H1 (cell line): ENCODE measurements at regions of chr2 and their contacts with region 1.

Region 1: DNA sequence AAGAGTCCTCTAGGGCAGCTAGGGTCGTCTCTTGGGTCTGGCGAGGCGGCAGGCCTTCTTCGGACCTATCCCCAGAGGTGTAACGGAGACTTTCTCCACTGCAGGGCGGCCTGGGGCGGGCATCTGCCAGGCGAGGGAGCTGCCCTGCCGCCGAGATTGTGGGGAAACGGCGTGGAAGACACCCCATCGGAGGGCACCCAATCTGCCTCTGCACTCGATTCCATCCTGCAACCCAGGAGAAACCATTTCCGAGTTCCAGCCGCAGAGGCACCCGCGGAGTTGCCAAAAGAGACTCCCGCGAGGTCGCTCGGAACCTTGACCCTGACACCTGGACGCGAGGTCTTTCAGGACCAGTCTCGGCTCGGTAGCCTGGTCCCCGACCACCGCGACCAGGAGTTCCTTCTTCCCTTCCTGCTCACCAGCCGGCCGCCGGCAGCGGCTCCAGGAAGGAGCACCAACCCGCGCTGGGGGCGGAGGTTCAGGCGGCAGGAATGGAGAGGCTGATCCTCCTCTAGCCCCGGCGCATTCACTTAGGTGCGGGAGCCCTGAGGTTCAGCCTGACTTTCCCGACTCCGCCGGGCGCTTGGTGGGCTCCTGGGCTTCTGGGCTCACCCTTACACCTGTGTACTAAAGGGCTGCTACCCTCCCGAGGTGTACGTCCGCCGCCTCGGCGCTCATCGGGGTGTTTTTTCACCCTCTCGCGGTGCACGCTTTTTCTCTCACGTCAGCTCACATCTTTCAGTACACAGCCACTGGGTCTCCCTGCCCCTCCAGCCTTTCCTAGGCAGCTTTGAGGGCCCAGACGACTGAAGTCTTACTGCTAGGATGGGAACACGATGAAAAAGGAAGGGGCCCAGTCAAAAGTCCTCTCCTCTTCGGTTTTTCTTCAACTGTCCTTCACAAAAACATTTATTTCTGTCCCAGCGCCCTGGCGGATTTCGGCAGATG is 8.1 kb downstream of the SIX2 start:
- DNase-seq: peak in 1 of 2 experiments; percentile 83
- H3K4me3 ChIP-seq: peak overlapping the region; percentile 18 to 57 (median 44); a peak in 7 of 8 replicates
- H3K27ac ChIP-seq: no peak overlapping the region
- H3K4me1 ChIP-seq: peaks cover 0 to 21% (median 18%) of the 10 kb centered on the region in 4 experiments; a peak in 5 of 7 replicates
- H3K27me3 ChIP-seq: peaks cover 72 to 89% (median 85%) of the 10 kb centered on the region in 4 experiments
- CTCF ChIP-seq: no peak
- EP300 ChIP-seq: no peak
- POLR2A ChIP-seq: no peak
- RAD21 ChIP-seq: no peak

Region 2: DNA sequence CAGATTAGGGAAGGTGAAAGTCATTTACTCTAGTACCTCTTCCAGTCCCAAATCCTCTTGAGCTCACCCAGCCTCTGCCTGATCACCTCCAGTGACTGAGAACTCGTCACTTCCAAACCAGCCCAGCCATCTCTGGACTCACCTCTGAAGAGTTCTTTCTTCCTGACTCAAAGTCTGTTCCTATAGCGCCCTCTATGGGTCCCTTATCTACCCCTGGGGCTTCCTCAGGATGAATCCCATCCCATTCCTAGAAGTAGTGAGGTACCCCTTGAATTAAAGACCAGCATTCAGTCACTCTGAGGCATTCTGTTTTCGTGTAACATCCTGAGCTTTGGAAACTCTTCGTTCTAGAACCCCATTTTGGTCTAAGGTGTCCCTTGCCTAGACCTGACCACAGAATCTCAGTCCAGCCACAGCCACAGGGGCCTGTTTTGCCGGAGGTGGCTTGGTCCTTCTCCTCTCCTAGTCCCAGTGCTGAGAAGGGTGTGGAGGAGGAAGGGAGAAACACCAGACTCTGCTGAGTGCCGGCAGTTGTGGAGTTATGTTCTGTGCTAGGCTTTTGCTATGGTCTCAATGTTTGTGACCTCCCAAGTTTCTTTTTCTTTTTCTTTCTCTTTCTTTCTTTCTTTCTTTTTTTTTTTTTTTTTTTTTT is 27.0 kb before region 1 on chr2:
- CTCF ChIA-PET with region 1: interaction called, 46 read pairs
- POLR2A ChIA-PET with region 1: interaction called, 4 read pairs
- DNase-seq: peak in 1 of 2 experiments; percentile 74
- H3K4me3 ChIP-seq: no peak overlapping the region
- H3K27ac ChIP-seq: no peak overlapping the region
- H3K4me1 ChIP-seq: peaks cover 2 to 19% (median 10%) of the 10 kb centered on the region in 4 experiments; a peak in 6 of 7 replicates
- H3K27me3 ChIP-seq: no peaks in the 10 kb centered on the region; a peak in 1 of 7 replicates
- CTCF ChIP-seq: peak in 2 of 3 experiments; percentile 81 to 84; a peak in 3 of 4 replicates
- EP300 ChIP-seq: no peak
- POLR2A ChIP-seq: no peak
- RAD21 ChIP-seq: peak; percentile 85 to 92

Region 3: DNA sequence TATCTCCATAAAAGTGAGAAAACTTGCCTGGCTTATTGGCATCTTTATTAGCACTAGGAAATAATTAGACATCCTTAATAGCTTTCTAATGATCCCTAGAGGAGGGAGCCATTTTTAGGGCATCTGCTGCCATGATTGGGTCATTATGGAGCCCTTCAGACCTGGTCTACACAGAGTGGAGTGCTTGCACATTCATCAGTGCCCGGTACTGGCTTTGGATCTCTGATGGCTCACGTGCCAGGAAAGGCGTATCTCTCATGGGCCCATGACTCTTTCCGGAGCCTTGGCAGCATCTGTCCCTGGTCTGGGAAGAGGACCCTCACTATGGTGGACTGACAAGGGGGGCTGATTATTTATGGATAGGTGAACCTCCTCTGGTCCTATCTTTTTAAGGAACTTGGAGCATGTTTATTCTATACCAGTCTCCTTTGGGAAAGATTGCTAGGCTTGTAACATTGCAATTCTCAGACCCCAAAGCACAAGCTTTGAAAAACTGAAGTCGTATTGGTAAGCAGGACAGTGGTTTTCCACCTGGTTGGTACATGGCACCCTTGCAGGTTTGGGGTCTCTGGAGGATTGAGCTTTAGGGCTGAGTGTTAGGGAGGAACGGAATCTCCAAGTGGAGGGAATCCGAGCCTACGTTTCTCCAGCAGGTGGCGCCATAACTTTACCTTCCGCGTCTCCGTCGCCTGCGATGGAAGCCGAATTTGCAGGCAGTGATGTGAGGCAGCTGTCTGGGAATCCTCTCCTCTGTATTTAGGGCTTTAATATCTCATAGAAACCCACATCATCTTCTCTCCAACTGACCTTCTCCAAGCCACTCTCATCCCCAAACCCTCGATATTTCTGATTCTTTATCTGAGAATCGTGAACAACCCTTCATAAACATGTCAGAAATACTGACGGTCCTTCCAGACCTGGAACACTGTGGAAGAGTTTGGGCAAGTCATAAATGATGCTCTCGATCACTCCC is 19.8 kb before region 1 on chr2:
- CTCF ChIA-PET with region 1: interaction called, 105 read pairs
- POLR2A ChIA-PET with region 1: interaction called, 3 read pairs
- DNase-seq: peak in 1 of 2 experiments; percentile 93
- H3K4me3 ChIP-seq: no peak overlapping the region
- H3K27ac ChIP-seq: no peak overlapping the region
- H3K4me1 ChIP-seq: peaks cover 0 to 4% (median 0%) of the 10 kb centered on the region in 4 experiments; a peak in 2 of 7 replicates
- H3K27me3 ChIP-seq: no peaks in the 10 kb centered on the region
- CTCF ChIP-seq: peak; percentile 88 to 95 (median 94)
- EP300 ChIP-seq: no peak
- POLR2A ChIP-seq: no peak
- RAD21 ChIP-seq: peak; percentile 98

Region 4: GRCh38 chr2:45031028-45031427 is 29.8 kb after region 1 on chr2:
- CTCF ChIA-PET with region 1: no interaction called
- POLR2A ChIA-PET with region 1: no interaction called
- DNase-seq: no peak
- H3K4me3 ChIP-seq: no peak overlapping the region
- H3K27ac ChIP-seq: no peak overlapping the region
- H3K4me1 ChIP-seq: no peaks in the 10 kb centered on the region
- H3K27me3 ChIP-seq: no peaks in the 10 kb centered on the region; a peak in 2 of 7 replicates
- CTCF ChIP-seq: no peak
- EP300 ChIP-seq: no peak
- POLR2A ChIP-seq: no peak
- RAD21 ChIP-seq: no peak

Region 5: DNA sequence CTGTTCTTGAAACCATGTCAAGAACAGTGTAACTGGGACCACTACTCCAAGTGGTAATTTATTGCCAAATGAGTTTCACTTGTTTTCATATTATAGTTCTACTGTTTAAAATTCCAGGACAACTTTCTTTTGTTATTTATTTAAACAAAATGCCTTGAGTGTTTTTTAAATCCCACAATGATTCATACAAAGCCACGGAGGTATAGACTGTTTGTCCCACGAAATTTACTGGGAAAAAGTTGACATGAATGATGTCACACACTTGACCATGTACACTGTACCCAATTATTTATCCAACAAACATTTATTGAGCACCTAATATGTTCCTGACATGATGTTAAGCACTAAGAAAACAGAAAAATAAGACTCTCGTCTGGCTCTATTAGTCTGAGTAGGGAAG is 252.0 kb after region 1 on chr2:
- CTCF ChIA-PET with region 1: no interaction called
- POLR2A ChIA-PET with region 1: no interaction called
- DNase-seq: no peak
- H3K4me3 ChIP-seq: no peak overlapping the region
- H3K27ac ChIP-seq: no peak overlapping the region
- H3K4me1 ChIP-seq: peaks cover 5 to 15% (median 12%) of the 10 kb centered on the region in 4 experiments
- H3K27me3 ChIP-seq: no peaks in the 10 kb centered on the region
- CTCF ChIP-seq: no peak
- EP300 ChIP-seq: no peak
- POLR2A ChIP-seq: no peak
- RAD21 ChIP-seq: no peak

Region 6: GRCh38 chr2:45283764-45284620 is 282.8 kb after region 1 on chr2:
- CTCF ChIA-PET with region 1: no interaction called
- POLR2A ChIA-PET with region 1: no interaction called
- DNase-seq: no peak
- H3K4me3 ChIP-seq: no peak overlapping the region
- H3K27ac ChIP-seq: no peak overlapping the region
- H3K4me1 ChIP-seq: peaks cover 0 to 3% (median 0%) of the 10 kb centered on the region in 4 experiments; a peak in 1 of 7 replicates
- H3K27me3 ChIP-seq: no peaks in the 10 kb centered on the region
- CTCF ChIP-seq: no peak
- EP300 ChIP-seq: no peak
- POLR2A ChIP-seq: no peak
- RAD21 ChIP-seq: no peak